Upper lobe of right lung (tissue), 1 donor: ENCODE measurements at regions of chr1 and their contacts with region 1.

Region 1: DNA sequence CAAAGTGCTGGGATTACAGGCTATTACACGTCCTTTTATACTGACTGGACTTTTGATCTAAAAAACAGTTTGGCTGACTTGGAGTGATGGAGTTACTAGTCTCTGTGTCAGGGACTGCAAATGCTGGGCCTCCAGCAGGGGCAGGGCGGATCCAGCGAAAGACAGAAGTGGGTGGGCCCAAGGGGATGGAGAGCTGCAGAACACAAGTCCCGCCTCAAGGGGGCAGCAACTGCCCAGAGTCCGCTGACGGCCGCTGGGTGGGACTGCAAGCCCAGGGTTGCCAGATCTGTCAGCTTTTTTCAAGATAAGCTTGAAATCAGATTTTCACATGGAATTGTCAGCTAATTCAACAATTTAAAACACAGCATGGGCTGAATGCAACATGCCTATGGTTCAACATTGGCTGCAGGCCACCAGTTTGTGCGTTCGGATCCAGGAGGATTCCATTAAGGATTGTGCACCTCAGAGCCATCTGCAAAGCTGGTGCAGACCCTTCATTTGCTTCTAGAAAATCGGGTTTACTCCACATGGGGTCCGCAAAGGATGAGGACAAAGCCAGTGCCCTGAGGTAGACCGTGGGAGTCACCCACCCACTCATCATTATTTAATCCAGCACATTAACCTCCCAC is 10.7 kb downstream of the STMN1 start:
- DNase-seq: peak; percentile 93
- ATAC-seq: peak; percentile 97
- H3K4me3 ChIP-seq: no peak overlapping the region
- H3K27ac ChIP-seq: no peak overlapping the region
- H3K4me1 ChIP-seq: peaks cover 30% of the 10 kb centered on the region
- H3K27me3 ChIP-seq: no peaks in the 10 kb centered on the region
- CTCF ChIP-seq: peak; percentile 98

Region 2: DNA sequence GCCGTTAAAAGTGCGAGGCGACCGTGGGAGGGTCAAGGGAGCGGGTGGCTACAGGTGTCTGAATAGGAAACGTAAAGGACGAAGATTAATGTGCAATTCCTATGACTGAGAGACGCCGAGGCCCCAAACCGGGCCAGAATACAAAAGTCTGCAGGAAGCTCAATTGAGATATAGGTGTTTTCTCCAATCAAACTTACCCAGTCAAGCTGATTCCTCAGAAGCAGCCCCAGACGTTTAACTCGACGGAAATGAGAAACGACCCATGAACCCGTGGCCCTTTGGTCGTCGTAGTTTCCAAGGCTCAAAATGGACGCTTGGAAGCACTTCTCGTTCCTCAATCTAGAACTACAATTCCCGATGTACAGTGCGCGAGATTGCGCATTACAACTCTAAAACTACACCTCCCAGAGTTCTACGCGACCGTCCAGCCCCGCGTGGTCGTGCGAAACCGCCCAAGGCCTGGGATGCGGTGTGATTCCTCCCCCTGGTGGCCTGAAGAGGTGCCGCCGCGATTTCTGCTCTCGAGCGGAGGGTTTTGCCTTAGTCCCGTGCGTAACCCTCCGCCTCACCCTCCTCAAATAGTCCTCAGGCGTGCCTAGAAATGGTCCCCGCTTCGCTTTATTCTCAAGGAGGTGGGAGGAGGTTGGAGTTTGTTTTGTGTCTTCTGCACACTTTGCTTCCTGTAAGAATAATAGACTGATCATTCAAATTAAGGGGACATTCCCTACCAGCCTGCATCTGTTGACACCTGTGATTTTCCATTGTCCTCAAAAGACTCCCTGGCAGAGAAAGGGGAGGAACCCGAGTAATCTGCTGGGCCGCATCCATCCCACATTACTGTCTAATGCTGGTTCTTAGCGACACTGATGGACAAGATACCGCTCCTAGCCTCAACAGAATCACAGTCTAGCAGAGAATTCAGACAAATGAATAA is 102.6 kb after region 1 on chr1 and contains the start of gene PAFAH2:
- intact Hi-C with region 1: loop called (anchors 5 kb)
- DNase-seq: peak; percentile 97
- ATAC-seq: peak; percentile 99
- H3K4me3 ChIP-seq: peak within 1 kb of the TSS; percentile 76
- H3K27ac ChIP-seq: peak within 1 kb of the TSS; percentile 92
- H3K4me1 ChIP-seq: peaks cover 16% of the 10 kb centered on the region
- H3K27me3 ChIP-seq: no peaks in the 10 kb centered on the region
- CTCF ChIP-seq: peak; percentile 95
- total RNA-seq, gene PAFAH2: 22.6 TPM